Endothelial cell of umbilical vein (primary cell): ENCODE measurements at regions of chr3 and their contacts with region 1.

Region 1: DNA sequence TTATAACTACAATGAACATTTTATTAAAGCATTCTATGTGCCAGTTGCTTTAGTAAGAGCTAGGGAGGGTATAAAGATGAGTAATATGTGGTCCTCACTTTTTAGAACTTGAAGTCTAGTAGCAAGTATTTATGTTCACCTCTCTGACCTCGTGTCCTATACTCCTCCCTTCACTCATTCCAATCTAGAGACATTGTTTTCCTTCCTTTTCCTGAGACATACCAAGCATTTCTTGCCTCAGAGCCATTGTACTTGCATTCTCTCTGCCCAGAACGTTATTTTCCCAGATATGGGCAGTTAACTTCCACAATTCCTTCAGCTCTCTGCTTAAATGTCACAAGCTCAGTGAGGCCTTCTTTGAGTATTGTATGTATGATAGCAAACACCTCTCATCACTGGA is 408.6 kb downstream of the PDCD6IP start:
- DNase-seq: peak; percentile 92
- H3K4me3 ChIP-seq: no peak overlapping the region
- H3K27ac ChIP-seq: peak overlapping the region; percentile 59
- H3K4me1 ChIP-seq: peaks cover 42% of the 10 kb centered on the region
- H3K27me3 ChIP-seq: no peaks in the 10 kb centered on the region
- CTCF ChIP-seq: no peak
- POLR2A ChIP-seq: peak; percentile 18

Region 2: DNA sequence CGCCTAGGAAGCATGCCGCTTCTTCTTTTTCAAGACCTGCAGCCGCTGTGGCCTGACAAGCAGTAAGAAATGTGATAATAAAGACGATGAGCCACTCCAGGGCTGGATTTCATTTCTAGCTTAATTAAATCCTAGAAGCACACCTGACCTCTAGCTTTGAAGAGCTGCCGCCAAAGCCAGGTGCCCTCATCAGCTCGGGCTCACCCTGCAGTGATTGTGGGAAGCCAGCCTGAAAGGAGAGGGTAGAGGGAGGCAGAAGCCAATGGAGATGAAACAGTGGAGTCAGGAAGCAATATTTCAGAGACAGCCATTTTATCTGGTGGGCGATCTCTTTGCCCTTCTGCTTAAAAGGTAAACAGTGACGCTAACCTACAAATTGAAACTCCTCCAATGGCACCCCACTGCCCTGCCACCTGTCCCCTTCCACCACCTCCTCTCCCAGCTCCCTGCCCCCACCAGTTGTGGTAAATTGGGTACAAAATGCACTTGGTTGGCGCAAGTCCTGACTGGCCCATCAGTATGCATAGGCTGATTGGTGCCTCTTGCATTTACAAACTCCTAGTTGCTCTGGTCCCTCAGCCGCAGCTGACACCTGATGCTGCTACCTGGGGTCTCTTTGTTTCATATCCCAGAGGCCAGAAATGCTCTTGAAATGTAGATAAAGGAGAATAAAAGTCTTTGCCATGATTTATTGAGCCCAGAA is 23.2 kb before region 1 on chr3:
- CTCF ChIA-PET with region 1: no interaction called
- POLR2A ChIA-PET with region 1: no interaction called
- dilution Hi-C with region 1: no loop called
- intact Hi-C with region 1: loop called (anchors 2 kb)
- DNase-seq: no peak
- H3K4me3 ChIP-seq: no peak overlapping the region
- H3K27ac ChIP-seq: peak overlapping the region; percentile 45
- H3K4me1 ChIP-seq: peaks cover 17% of the 10 kb centered on the region
- H3K27me3 ChIP-seq: no peaks in the 10 kb centered on the region
- CTCF ChIP-seq: no peak
- POLR2A ChIP-seq: no peak

Region 3: DNA sequence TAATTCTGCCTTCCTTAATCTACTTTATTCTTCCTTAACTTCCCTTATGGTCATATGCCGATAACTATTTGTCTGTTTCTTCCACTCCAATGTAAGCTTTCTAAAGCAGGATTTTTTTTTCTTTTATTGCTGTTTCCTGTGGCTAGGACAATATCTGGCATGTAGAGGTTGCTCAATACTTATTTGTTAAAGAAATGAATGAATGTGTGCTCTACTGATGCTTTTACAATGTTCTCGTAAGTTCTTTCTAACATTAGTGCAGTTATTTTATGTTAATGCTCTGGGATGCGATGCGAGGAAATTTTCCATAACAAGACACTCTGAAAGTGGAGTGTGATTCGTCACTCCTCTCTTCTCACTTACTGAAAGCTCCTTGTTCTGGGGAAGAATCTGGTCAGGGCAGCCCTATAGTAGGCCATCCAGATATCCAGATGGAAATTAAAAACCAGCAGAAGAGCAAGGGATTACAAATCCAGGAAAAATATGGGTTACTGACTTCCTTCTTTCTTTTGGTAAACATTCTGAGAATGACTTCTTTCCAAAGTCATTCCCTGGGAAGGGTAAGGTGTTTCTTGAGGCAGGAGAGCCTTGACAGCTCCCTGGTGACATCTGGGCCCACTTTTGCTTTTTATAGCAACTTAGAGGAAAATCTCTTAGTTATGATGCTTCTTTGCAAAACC is 11.8 kb after region 1 on chr3:
- CTCF ChIA-PET with region 1: interaction called, 5 read pairs
- POLR2A ChIA-PET with region 1: no interaction called
- dilution Hi-C with region 1: no loop called
- intact Hi-C with region 1: loop called (anchors 1 kb)
- DNase-seq: peak; percentile 30
- H3K4me3 ChIP-seq: no peak overlapping the region
- H3K27ac ChIP-seq: peak overlapping the region; percentile 80
- H3K4me1 ChIP-seq: peaks cover 42% of the 10 kb centered on the region
- H3K27me3 ChIP-seq: no peaks in the 10 kb centered on the region
- CTCF ChIP-seq: no peak
- POLR2A ChIP-seq: no peak

Region 4: GRCh38 chr3:34696831-34697230 is 489.8 kb after region 1 on chr3:
- CTCF ChIA-PET with region 1: no interaction called
- POLR2A ChIA-PET with region 1: no interaction called
- dilution Hi-C with region 1: no loop called
- intact Hi-C with region 1: no loop called
- DNase-seq: no peak
- H3K4me3 ChIP-seq: no peak overlapping the region
- H3K27ac ChIP-seq: no peak overlapping the region
- H3K4me1 ChIP-seq: no peaks in the 10 kb centered on the region
- H3K27me3 ChIP-seq: no peaks in the 10 kb centered on the region
- CTCF ChIP-seq: no peak
- POLR2A ChIP-seq: no peak